Activated CD4-positive, alpha-beta T cell treated with anti-CD3 and anti-CD28 coated beads for 36 hours (primary cell): ENCODE measurements at regions of chr12 and their contacts with region 1.

Region 1: GRCh38 chr12:114735680-114736374 is 51.9 kb upstream of the TBX3 start:
- DNase-seq: no peak
- ATAC-seq: no peak
- H3K4me3 Mint-ChIP-seq: no peak overlapping the region
- H3K27ac Mint-ChIP-seq: no peak overlapping the region
- H3K4me1 Mint-ChIP-seq: no peaks in the 10 kb centered on the region
- H3K27me3 Mint-ChIP-seq: peaks cover 19% of the 10 kb centered on the region

Region 2: GRCh38 chr12:114480337-114481199 is 255.3 kb before region 1 on chr12:
- CTCF ChIA-PET with region 1: no interaction called
- POLR2A ChIA-PET with region 1: no interaction called
- intact Hi-C with region 1: no loop called
- DNase-seq: no peak
- ATAC-seq: no peak
- H3K4me3 Mint-ChIP-seq: no peak overlapping the region
- H3K27ac Mint-ChIP-seq: no peak overlapping the region
- H3K4me1 Mint-ChIP-seq: peaks cover 7% of the 10 kb centered on the region
- H3K27me3 Mint-ChIP-seq: peaks cover 50% of the 10 kb centered on the region

Region 3: GRCh38 chr12:114580306-114580705 is 155.5 kb before region 1 on chr12:
- CTCF ChIA-PET with region 1: no interaction called
- POLR2A ChIA-PET with region 1: no interaction called
- intact Hi-C with region 1: no loop called
- DNase-seq: no peak
- ATAC-seq: no peak
- H3K4me3 Mint-ChIP-seq: no peak overlapping the region
- H3K27ac Mint-ChIP-seq: no peak overlapping the region
- H3K4me1 Mint-ChIP-seq: no peaks in the 10 kb centered on the region
- H3K27me3 Mint-ChIP-seq: peaks cover 10% of the 10 kb centered on the region

Region 4: GRCh38 chr12:114697741-114698565 is 37.9 kb before region 1 on chr12:
- CTCF ChIA-PET with region 1: no interaction called
- POLR2A ChIA-PET with region 1: interaction called, 6 read pairs
- intact Hi-C with region 1: loop called in 1 of 2 experiments (anchors 5 kb)
- DNase-seq: no peak
- ATAC-seq: no peak
- H3K4me3 Mint-ChIP-seq: no peak overlapping the region
- H3K27ac Mint-ChIP-seq: no peak overlapping the region
- H3K4me1 Mint-ChIP-seq: no peaks in the 10 kb centered on the region
- H3K27me3 Mint-ChIP-seq: peaks cover 88% of the 10 kb centered on the region

Region 5: GRCh38 chr12:114812858-114813761 is 77.3 kb after region 1 on chr12:
- CTCF ChIA-PET with region 1: no interaction called
- POLR2A ChIA-PET with region 1: no interaction called
- intact Hi-C with region 1: no loop called
- DNase-seq: no peak
- ATAC-seq: no peak
- H3K4me3 Mint-ChIP-seq: no peak overlapping the region
- H3K27ac Mint-ChIP-seq: no peak overlapping the region
- H3K4me1 Mint-ChIP-seq: no peaks in the 10 kb centered on the region
- H3K27me3 Mint-ChIP-seq: peaks cover 5% of the 10 kb centered on the region